ENCODE measurements at regions of chr1 and their contacts with region 1.

Region 1: DNA sequence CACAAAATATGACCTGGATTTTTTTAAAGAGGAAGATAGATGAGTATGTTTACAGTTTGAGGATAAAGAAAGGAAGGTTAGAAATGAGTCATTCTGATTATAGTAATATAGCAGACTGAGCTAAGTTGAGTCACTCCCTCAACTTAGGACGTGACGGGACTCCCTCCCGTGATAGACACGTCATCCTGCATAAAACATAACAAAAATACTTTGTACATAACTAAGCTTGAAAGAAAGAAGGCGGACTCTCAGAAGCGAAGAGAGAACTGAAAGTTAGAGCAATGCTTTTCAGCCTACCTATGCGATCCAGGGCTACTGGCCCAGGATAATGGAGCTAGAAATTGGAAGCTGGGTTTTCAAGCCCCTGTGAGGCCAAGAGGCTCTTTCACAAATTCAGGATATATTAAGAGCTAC is 53.0 kb upstream of the DESI2 start:
- ATAC-seq: peak; percentile 34 to 90 (median 76)
- H3K4me3 ChIP-seq: no peak overlapping the region
- H3K27ac ChIP-seq: no peak overlapping the region
- H3K4me1 ChIP-seq: peaks cover 0 to 1% of the 10 kb centered on the region in 2 donors

Region 2: GRCh38 chr1:244796718-244797406 is 196.9 kb after region 1 on chr1:
- in situ Hi-C with region 1: loop called in 8 of 9 experiments (anchors 10 to 25 kb)
- ATAC-seq: peak; percentile 39 to 79 (median 64)
- H3K4me3 ChIP-seq: no peak overlapping the region
- H3K27ac ChIP-seq: no peak overlapping the region
- H3K4me1 ChIP-seq: no peaks in the 10 kb centered on the region

Region 3: GRCh38 chr1:244864253-244865027 is 264.5 kb after region 1 on chr1 and contains the start of gene HNRNPU:
- in situ Hi-C with region 1: no loop called
- ATAC-seq: peak; percentile 64 to 74 (median 68)
- H3K4me3 ChIP-seq: peak within 1 kb of the TSS; percentile 61 to 94 (median 86)
- H3K27ac ChIP-seq: peak within 1 kb of the TSS; percentile 96 to 97
- H3K4me1 ChIP-seq: peaks cover 18 to 39% of the 10 kb centered on the region in 2 donors
- total RNA-seq, gene HNRNPU: 243 to 657 (median 314) TPM

Measured in motor neuron (in vitro differentiated cells).